H1 (cell line): ENCODE measurements at regions of chr11 and their contacts with region 1.

Region 1: DNA sequence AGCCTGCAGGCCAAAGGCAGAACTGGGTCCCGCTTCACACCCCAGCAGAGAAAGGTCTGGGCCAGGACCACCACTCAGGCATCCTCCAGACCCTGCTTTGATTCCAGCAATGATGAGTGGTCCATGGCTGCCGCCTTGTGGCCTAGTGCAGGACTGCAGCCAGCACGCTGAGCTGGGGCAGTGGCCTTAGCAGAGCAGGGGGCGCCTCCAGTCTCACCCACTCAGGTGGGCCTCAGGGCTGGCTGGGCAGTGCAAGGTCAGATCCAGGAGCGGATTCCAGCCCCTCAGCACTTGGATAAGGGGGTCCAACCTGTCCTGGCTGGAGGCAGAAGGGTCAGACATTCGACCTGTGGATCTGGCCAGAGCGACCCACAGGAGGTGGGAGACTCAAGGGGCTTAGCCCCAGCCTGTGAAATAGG is 9.6 kb upstream of the PDE2A start:
- DNase-seq: peak in 1 of 2 experiments; percentile 99
- H3K4me3 ChIP-seq: no peak overlapping the region
- H3K27ac ChIP-seq: no peak overlapping the region
- H3K4me1 ChIP-seq: peaks cover 0 to 16% (median 6%) of the 10 kb centered on the region in 4 experiments; a peak in 4 of 7 replicates
- H3K27me3 ChIP-seq: peaks cover 0 to 5% (median under 1%) of the 10 kb centered on the region in 4 experiments; a peak in 2 of 7 replicates
- CTCF ChIP-seq: peak; percentile 98 to 99 (median 99)
- EP300 ChIP-seq: no peak
- POLR2A ChIP-seq: no peak
- RAD21 ChIP-seq: peak; percentile 95 to 98

Region 2: GRCh38 chr11:72585762-72586311 is 98.0 kb before region 1 on chr11:
- CTCF ChIA-PET with region 1: interaction called, 384 read pairs
- POLR2A ChIA-PET with region 1: interaction called, 6 read pairs
- DNase-seq: peak in 1 of 2 experiments; percentile 82
- H3K4me3 ChIP-seq: no peak overlapping the region
- H3K27ac ChIP-seq: no peak overlapping the region
- H3K4me1 ChIP-seq: peaks cover 0 to 7% (median 3%) of the 10 kb centered on the region in 4 experiments; a peak in 4 of 7 replicates
- H3K27me3 ChIP-seq: peaks cover 24 to 73% (median 57%) of the 10 kb centered on the region in 4 experiments
- CTCF ChIP-seq: peak; percentile 84 to 94 (median 90)
- EP300 ChIP-seq: no peak
- POLR2A ChIP-seq: no peak
- RAD21 ChIP-seq: peak; percentile 87 to 89

Region 3: GRCh38 chr11:72609045-72609444 is 74.7 kb before region 1 on chr11:
- CTCF ChIA-PET with region 1: interaction called, 158 read pairs
- POLR2A ChIA-PET with region 1: interaction called, 4 read pairs
- DNase-seq: no peak
- H3K4me3 ChIP-seq: no peak overlapping the region
- H3K27ac ChIP-seq: no peak overlapping the region
- H3K4me1 ChIP-seq: no peaks in the 10 kb centered on the region
- H3K27me3 ChIP-seq: no peaks in the 10 kb centered on the region; a peak in 1 of 7 replicates
- CTCF ChIP-seq: peak in 2 of 3 experiments; percentile 55 to 58; a peak in 3 of 4 replicates
- EP300 ChIP-seq: no peak
- POLR2A ChIP-seq: no peak
- RAD21 ChIP-seq: peak in 1 of 2 experiments; percentile 39; a peak in 1 of 4 replicates

Region 4: GRCh38 chr11:72631806-72632731 is 51.7 kb before region 1 on chr11:
- CTCF ChIA-PET with region 1: interaction called, 57 read pairs
- POLR2A ChIA-PET with region 1: no interaction called
- DNase-seq: no peak
- H3K4me3 ChIP-seq: no peak overlapping the region
- H3K27ac ChIP-seq: no peak overlapping the region
- H3K4me1 ChIP-seq: peaks cover 0 to 23% (median 9%) of the 10 kb centered on the region in 4 experiments; a peak in 6 of 7 replicates
- H3K27me3 ChIP-seq: no peaks in the 10 kb centered on the region
- CTCF ChIP-seq: no peak
- EP300 ChIP-seq: no peak
- POLR2A ChIP-seq: no peak
- RAD21 ChIP-seq: no peak

Region 5: GRCh38 chr11:72652873-72653630 is 30.7 kb before region 1 on chr11:
- CTCF ChIA-PET with region 1: interaction called, 97 read pairs
- POLR2A ChIA-PET with region 1: interaction called, 7 read pairs
- DNase-seq: peak; percentile 21 to 77
- H3K4me3 ChIP-seq: no peak overlapping the region
- H3K27ac ChIP-seq: no peak overlapping the region
- H3K4me1 ChIP-seq: peaks cover 0 to 12% (median 7%) of the 10 kb centered on the region in 4 experiments; a peak in 4 of 7 replicates
- H3K27me3 ChIP-seq: no peaks in the 10 kb centered on the region; a peak in 1 of 7 replicates
- CTCF ChIP-seq: no peak
- EP300 ChIP-seq: no peak
- POLR2A ChIP-seq: no peak
- RAD21 ChIP-seq: no peak

Region 6: GRCh38 chr11:72703267-72704008 is 19.6 kb after region 1 on chr11:
- CTCF ChIA-PET with region 1: interaction called, 79 read pairs
- POLR2A ChIA-PET with region 1: no interaction called
- DNase-seq: no peak
- H3K4me3 ChIP-seq: no peak overlapping the region
- H3K27ac ChIP-seq: 0 out of 2 replicates have a peak overlapping the region, but pooled peaks have one; percentile 16
- H3K4me1 ChIP-seq: peaks cover 11 to 40% (median 33%) of the 10 kb centered on the region in 4 experiments
- H3K27me3 ChIP-seq: no peaks in the 10 kb centered on the region
- CTCF ChIP-seq: no peak; a peak in 1 of 4 replicates
- EP300 ChIP-seq: no peak
- POLR2A ChIP-seq: no peak
- RAD21 ChIP-seq: no peak

Region 7: GRCh38 chr11:73141848-73142286 is 458.1 kb after region 1 on chr11:
- CTCF ChIA-PET with region 1: no interaction called
- POLR2A ChIA-PET with region 1: no interaction called
- DNase-seq: peak in 1 of 2 experiments; percentile 84
- H3K4me3 ChIP-seq: peak overlapping the region; percentile 69 to 80 (median 78)
- H3K27ac ChIP-seq: peak overlapping the region; percentile 90; the same call in 1 of the 2 replicates
- H3K4me1 ChIP-seq: peaks cover 2 to 10% (median 8%) of the 10 kb centered on the region in 4 experiments; a peak in 6 of 7 replicates
- H3K27me3 ChIP-seq: peaks cover 0 to 12% (median 6%) of the 10 kb centered on the region in 4 experiments; a peak in 3 of 7 replicates
- CTCF ChIP-seq: no peak
- EP300 ChIP-seq: no peak
- POLR2A ChIP-seq: no peak
- RAD21 ChIP-seq: no peak